ENCODE measurements at regions of chr13 and their contacts with region 1.

Region 1: DNA sequence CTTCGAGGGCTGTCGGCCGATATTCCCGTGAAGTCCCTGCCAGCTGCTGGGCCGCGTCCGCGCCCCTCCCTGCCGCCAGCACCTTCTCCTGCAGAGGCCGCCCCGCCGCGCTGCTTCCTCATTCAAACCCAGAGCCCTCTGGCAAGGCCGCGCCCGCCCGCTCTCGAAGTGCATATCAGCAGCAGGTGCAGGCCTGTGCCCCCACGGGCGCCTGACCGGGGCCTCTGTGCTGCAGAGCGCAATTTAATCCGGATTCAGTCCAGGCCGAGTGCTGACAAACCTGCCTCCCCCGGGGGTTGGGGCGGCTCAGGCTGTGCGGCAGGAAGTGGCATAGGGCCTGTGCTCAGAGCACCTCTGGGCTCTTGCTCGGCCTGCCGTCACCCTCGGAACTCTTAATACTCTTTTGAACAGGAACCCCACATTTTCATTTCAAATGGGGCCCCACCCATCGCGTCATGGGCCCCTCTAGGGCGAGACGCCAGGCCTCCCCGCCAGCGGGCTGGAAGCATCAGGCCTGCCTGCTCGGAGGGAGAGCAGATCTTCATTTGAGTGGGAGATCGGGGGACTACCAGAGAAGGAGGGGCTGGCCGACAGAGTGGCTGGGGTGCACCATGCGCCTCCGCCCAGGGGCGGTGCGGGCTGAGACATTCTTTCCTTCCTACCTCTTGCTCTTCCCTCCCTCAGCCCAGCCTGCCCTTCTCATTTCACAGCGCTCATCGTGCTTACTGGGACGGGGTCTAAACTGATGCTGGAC is 125.7 kb downstream of the TNFRSF19 start:
- DNase-seq: peak; percentile 70
- H3K4me3 Mint-ChIP-seq: peak overlapping the region; percentile 61
- H3K27ac Mint-ChIP-seq: peak overlapping the region; percentile 62
- H3K4me1 Mint-ChIP-seq: peaks cover 10% of the 10 kb centered on the region
- H3K27me3 Mint-ChIP-seq: no peaks in the 10 kb centered on the region

Region 2: DNA sequence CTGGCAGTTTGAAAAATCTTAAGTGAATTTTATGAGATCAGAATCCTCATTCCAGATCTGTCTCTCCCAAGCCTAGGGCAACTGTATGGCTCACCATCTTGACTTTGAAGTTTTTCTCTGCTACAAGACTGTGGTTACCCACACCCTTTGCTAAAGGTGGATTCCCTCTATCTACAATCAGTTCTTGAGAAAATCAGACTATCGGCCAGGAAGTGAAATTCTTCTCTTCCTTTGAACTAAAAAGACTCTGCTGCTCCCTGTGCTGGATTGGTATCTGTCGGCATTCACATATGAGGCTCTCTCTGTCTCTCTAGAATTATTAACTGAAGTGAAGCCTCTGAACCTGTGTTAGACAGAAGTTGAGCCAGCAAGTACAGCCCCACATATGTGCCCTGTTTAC is 47.4 kb after region 1 on chr13:
- CTCF ChIA-PET with region 1: no interaction called
- intact Hi-C with region 1: loop called (anchors 1 kb)
- DNase-seq: peak; percentile 25
- H3K4me3 Mint-ChIP-seq: no peak overlapping the region
- H3K27ac Mint-ChIP-seq: no peak overlapping the region
- H3K4me1 Mint-ChIP-seq: peaks cover 32% of the 10 kb centered on the region
- H3K27me3 Mint-ChIP-seq: no peaks in the 10 kb centered on the region

Region 3: GRCh38 chr13:23856008-23856750 is 160.3 kb after region 1 on chr13:
- CTCF ChIA-PET with region 1: no interaction called
- intact Hi-C with region 1: no loop called
- DNase-seq: no peak
- H3K4me3 Mint-ChIP-seq: no peak overlapping the region
- H3K27ac Mint-ChIP-seq: no peak overlapping the region
- H3K4me1 Mint-ChIP-seq: peaks cover 3% of the 10 kb centered on the region
- H3K27me3 Mint-ChIP-seq: no peaks in the 10 kb centered on the region